ENCODE measurements at regions of chr3 and their contacts with region 1.

Region 1: DNA sequence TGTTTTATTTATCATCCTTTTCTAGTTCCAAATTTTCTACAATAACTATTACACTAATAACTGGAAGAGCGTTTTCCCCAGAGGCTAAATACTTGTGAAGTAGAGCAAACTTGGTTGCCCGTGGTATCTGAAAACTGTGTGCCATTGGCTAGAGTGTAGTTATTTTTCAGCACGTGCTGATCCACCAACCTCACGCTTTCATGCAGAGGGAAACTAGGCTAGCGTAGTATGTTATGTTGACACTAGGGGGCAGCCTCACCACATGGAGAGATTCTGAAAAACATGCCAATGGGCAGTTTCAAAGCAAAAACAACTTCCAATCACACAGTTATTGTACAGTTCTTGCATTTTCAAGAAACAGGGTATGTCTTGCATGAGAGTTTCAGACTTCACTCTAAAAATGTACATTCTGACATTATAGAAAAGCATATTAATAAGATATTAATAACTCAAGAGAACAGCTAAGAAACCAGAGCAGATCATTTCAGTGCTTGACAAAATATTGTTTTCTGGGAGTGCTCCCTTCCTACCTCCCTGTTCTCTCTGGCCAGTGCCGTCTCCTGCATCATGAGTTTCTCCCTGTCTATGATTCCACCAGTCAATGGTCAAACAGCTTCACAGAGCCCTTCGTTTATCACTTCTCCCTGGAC is 39.7 kb downstream of the SPATA12 start:
- H3K4me3 ChIP-seq: no peak overlapping the region
- H3K27ac ChIP-seq: no peak overlapping the region
- H3K4me1 ChIP-seq: no peaks in the 10 kb centered on the region
- CTCF ChIP-seq: peak; percentile 42; the same call in 1 of the 2 replicates

Region 2: GRCh38 chr3:57112206-57112605 is 12.0 kb after region 1 on chr3:
- CTCF ChIA-PET with region 1: interaction called, 11 read pairs
- POLR2A ChIA-PET with region 1: no interaction called
- H3K4me3 ChIP-seq: no peak overlapping the region
- H3K27ac ChIP-seq: no peak overlapping the region
- H3K4me1 ChIP-seq: no peaks in the 10 kb centered on the region
- CTCF ChIP-seq: no peak

Region 3: GRCh38 chr3:57221883-57222282 is 121.7 kb after region 1 on chr3:
- CTCF ChIA-PET with region 1: interaction called, 19 read pairs
- POLR2A ChIA-PET with region 1: no interaction called
- H3K4me3 ChIP-seq: no peak overlapping the region
- H3K27ac ChIP-seq: no peak overlapping the region
- H3K4me1 ChIP-seq: no peaks in the 10 kb centered on the region
- CTCF ChIP-seq: no peak